HepG2 (cell line): ENCODE measurements at regions of chr11 and their contacts with region 1.

Region 1: DNA sequence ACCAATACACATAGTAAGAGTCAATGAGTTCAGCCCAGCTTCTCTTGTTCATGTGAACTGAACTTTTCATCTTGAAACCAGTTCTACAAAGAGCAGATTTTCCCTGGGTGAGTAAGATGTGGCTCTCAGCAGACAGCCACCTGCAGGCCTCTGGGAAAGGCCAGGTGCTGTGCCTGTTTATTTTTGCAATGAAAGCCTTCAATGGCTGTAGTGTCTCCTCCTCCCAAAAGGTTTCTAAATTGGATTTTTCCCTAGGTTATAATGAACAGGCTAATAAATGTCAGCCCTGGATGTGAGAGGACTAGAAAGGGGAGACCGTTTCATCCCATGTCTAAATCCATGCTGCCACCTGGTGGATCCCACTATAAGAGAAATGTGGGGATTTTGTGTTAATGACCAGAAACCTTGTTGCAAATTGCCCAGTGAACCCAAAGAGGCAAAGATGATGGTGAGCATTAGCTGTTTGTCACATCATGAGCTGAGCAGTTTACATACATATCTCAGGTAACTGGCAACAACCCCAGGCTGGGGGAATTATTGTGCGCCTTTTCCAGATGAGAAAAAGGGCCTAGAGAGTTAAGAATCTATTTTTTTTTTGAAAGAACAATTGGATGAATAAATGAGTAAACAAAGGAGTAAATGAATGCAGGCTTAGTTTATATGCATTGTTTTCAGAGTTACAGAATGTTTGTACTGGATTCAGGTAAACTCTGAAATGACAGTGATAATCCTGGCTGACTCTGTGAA is 12.7 kb downstream of the C11orf91 start:
- DNase-seq: peak; percentile 60
- ATAC-seq: peak; percentile 47
- H3K4me3 ChIP-seq: no peak overlapping the region
- H3K27ac ChIP-seq: no peak overlapping the region
- H3K4me1 ChIP-seq: peaks cover 34% of the 10 kb centered on the region
- H3K27me3 ChIP-seq: no peaks in the 10 kb centered on the region
- CTCF ChIP-seq: peak; percentile 86
- EP300 ChIP-seq: no peak
- POLR2A ChIP-seq: no peak
- RAD21 ChIP-seq: peak; percentile 74

Region 2: GRCh38 chr11:33266393-33267215 is 421.3 kb before region 1 on chr11:
- CTCF ChIA-PET with region 1: no interaction called
- POLR2A ChIA-PET with region 1: no interaction called
- in situ Hi-C with region 1: no loop called
- intact Hi-C with region 1: loop called (anchors 10 kb)
- DNase-seq: peak; percentile 75
- ATAC-seq: peak; percentile 97
- H3K4me3 ChIP-seq: no peak overlapping the region
- H3K27ac ChIP-seq: peak overlapping the region; percentile 90
- H3K4me1 ChIP-seq: peaks cover 60% of the 10 kb centered on the region
- H3K27me3 ChIP-seq: no peaks in the 10 kb centered on the region
- CTCF ChIP-seq: no peak
- EP300 ChIP-seq: peak in 1 of 2 experiments; percentile 44; a peak in 1 of 4 replicates
- POLR2A ChIP-seq: no peak
- RAD21 ChIP-seq: no peak

Region 3: GRCh38 chr11:33362051-33362910 is 325.6 kb before region 1 on chr11:
- CTCF ChIA-PET with region 1: interaction called, 38 read pairs
- POLR2A ChIA-PET with region 1: no interaction called
- in situ Hi-C with region 1: loop called (anchors 5 kb)
- intact Hi-C with region 1: loop called (anchors 1 kb)
- DNase-seq: peak; percentile 27
- ATAC-seq: peak; percentile 67
- H3K4me3 ChIP-seq: no peak overlapping the region
- H3K27ac ChIP-seq: no peak overlapping the region
- H3K4me1 ChIP-seq: no peaks in the 10 kb centered on the region
- H3K27me3 ChIP-seq: no peaks in the 10 kb centered on the region
- CTCF ChIP-seq: peak; percentile 51
- EP300 ChIP-seq: no peak
- POLR2A ChIP-seq: no peak
- RAD21 ChIP-seq: 0 out of 2 replicates have a peak, but pooled peaks have one; percentile 38

Region 4: DNA sequence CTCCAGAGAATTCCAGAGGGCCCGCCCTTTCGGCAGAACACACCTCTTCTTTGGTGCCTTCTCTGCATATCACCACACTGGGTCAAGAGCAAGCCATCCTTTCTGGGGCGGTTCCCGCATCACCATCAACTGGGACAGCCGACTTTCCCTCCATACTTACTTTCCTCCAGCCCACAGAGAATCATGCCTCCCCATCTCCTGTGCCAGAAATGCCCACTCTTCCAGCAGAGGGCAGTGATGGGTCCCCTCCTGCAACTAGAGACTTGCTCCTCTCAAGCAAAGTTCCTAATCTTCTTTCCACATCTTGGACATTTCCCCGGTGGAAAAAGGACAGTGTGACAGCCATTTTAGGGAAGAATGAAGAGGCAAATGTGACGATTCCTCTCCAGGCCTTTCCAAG is 145.0 kb before region 1 on chr11:
- CTCF ChIA-PET with region 1: interaction called, 19 read pairs
- POLR2A ChIA-PET with region 1: no interaction called
- in situ Hi-C with region 1: loop called (anchors 5 kb)
- intact Hi-C with region 1: loop called (anchors 1 kb)
- DNase-seq: peak; percentile 23
- ATAC-seq: peak; percentile 84
- H3K4me3 ChIP-seq: no peak overlapping the region
- H3K27ac ChIP-seq: no peak overlapping the region
- H3K4me1 ChIP-seq: no peaks in the 10 kb centered on the region
- H3K27me3 ChIP-seq: peaks cover 0 to 40% of the 10 kb centered on the region in 2 experiments; a peak in 3 of 5 replicates
- CTCF ChIP-seq: peak; percentile 68
- EP300 ChIP-seq: no peak
- POLR2A ChIP-seq: no peak
- RAD21 ChIP-seq: 0 out of 2 replicates have a peak, but pooled peaks have one; percentile 20

Region 5: GRCh38 chr11:33700425-33701271 is 12.7 kb after region 1 on chr11 and contains the start of gene C11orf91:
- CTCF ChIA-PET with region 1: no interaction called
- POLR2A ChIA-PET with region 1: interaction called, 81 read pairs
- in situ Hi-C with region 1: no loop called
- intact Hi-C with region 1: no loop called
- DNase-seq: peak; percentile 87
- ATAC-seq: peak; percentile 72
- H3K4me3 ChIP-seq: peak within 1 kb of the TSS; percentile 64 to 77 (median 75)
- H3K27ac ChIP-seq: peak within 1 kb of the TSS; percentile 97
- H3K4me1 ChIP-seq: peaks cover 79% of the 10 kb centered on the region
- H3K27me3 ChIP-seq: no peaks in the 10 kb centered on the region
- CTCF ChIP-seq: 0 out of 2 replicates have a peak, but pooled peaks have one; percentile 4
- EP300 ChIP-seq: no peak
- POLR2A ChIP-seq: peak; percentile 66 to 80
- RAD21 ChIP-seq: peak; percentile 13; the same call in 1 of the 2 replicates
- total RNA-seq, gene C11orf91: 0.35 TPM in 1 of 2 replicates, not detected in the other